BJ (cell line): ENCODE measurements at regions of chr3 and their contacts with region 1.

Region 1: DNA sequence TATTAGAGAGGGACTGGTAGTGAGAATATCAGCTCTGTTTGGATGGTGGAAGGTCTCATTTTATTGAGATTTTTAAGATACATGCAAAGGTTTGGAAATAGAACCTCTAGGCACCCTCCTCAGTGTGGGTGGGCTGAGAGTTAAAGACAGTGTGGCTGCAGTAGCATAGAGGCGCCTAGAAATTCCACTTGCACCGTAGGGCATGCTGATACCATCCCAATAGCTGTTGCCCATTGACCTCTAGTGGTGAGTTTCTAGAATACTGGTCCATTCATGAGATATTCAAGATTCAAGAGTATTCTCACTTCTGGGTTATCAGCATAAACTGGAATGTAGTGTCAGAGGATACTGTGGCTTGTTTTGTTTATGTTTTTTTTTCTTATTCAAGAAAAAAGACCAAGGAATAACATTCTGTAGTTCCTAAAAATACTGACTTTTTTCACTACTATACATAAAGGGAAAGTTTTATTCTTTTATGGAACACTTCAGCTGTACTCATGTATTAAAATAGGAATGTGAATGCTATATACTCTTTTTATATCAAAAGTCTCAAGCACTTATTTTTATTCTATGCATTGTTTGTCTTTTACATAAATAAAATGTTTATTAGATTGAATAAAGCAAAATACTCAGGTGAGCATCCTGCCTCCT is 87.2 kb downstream of the TGFBR2 start:
- DNase-seq: no peak
- H3K4me3 ChIP-seq: no peak overlapping the region
- H3K27me3 ChIP-seq: no peaks in the 10 kb centered on the region
- CTCF ChIP-seq: peak; percentile 74

Region 2: GRCh38 chr3:30042274-30042859 is 651.2 kb before region 1 on chr3:
- CTCF ChIA-PET with region 1: interaction called, 10 read pairs
- POLR2A ChIA-PET with region 1: no interaction called
- DNase-seq: peak; percentile 10
- H3K4me3 ChIP-seq: no peak overlapping the region
- H3K27me3 ChIP-seq: no peaks in the 10 kb centered on the region
- CTCF ChIP-seq: peak; percentile 70

Region 3: GRCh38 chr3:30112902-30113484 is 580.6 kb before region 1 on chr3:
- CTCF ChIA-PET with region 1: interaction called, 26 read pairs
- POLR2A ChIA-PET with region 1: no interaction called
- DNase-seq: no peak
- H3K4me3 ChIP-seq: no peak overlapping the region
- H3K27me3 ChIP-seq: no peaks in the 10 kb centered on the region
- CTCF ChIP-seq: peak; percentile 61

Region 4: DNA sequence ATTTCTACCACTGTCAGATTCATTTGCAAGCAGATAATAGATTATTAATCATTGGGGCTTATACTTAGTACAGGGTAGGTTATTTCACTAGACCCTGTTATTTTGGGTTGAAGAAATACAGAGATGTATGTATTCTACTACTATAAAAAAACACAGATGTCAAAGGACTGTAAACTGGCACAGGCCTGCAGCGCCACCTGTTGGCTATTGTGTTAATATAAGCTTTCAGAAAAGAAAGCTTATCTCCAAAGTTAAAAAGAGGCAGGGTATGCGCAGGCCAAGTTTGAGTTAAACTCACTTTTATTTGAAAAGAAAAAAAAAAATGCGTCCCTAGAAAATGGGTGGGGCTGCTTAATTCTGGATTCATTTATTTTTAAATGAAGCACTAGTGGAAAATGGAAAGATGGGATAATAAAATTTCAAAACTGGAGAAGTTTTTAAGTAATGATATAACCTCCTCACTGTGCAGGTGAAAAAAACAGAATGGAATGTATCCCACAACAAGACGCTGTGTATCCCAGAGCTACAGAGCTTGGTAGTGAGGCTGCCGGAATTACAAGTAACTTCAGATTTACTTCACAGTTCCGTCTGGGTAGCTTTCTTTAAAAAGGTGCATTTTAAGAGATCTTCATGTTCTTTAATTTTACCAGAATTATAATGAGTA is 494.4 kb before region 1 on chr3:
- CTCF ChIA-PET with region 1: interaction called, 43 read pairs
- POLR2A ChIA-PET with region 1: no interaction called
- DNase-seq: no peak
- H3K4me3 ChIP-seq: no peak overlapping the region
- H3K27me3 ChIP-seq: no peaks in the 10 kb centered on the region
- CTCF ChIP-seq: peak; percentile 75

Region 5: GRCh38 chr3:30606301-30607031 is 87.1 kb before region 1 on chr3 and contains the start of gene TGFBR2:
- CTCF ChIA-PET with region 1: interaction called, 12 read pairs
- POLR2A ChIA-PET with region 1: no interaction called
- DNase-seq: peak; percentile 93
- H3K4me3 ChIP-seq: peak within 1 kb of the TSS; percentile 65
- H3K27me3 ChIP-seq: no peaks in the 10 kb centered on the region
- CTCF ChIP-seq: no peak; the same call in 1 of the 2 replicates
- polyA plus RNA-seq, gene TGFBR2: 61.0 and 73.1 TPM in 2 replicates

Region 6: DNA sequence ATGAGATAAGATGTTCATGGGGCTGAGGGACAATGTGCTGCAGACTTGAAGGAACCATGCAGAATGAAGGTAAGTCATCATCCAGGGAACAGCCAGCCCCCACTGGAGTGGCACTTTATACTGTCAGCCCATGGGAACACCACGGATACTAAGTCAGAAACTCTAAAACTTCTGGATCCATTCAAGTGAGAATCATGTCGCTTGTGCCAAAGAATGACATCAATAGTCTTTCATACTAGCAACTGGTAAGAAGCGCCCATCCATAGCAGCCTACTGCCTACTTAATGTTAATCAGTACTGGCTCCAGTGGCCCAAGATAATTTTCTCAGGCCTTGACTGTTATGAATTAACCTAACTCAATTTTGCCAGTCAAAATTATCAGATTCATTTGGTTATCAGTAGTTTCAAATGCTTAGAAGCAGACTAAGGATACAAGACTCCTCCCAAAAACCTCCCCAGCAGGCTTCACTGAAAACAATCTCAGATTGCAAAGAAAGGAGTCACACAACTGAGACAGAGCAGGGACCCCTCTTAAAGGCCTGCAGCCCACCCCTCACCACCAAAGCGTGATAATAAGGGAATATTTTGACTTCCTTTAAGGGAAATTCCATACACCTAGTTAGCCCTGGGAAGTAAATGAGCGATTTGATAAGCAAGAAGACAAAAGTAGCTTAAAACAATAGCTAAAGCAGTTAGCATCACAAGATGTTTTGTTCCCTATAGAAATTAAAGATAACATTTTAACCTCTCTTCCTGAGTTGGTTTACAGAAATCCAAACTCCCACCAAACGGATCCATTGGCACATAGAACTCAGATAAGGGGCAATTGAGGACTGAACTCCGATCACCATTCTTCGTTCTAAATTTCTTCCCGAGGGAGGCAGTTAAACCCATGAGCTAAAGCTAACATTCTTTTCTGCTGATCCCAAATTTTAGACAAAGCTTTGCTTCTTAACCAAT is 11.6 kb after region 1 on chr3:
- CTCF ChIA-PET with region 1: interaction called, 27 read pairs
- POLR2A ChIA-PET with region 1: no interaction called
- DNase-seq: no peak
- H3K4me3 ChIP-seq: no peak overlapping the region
- H3K27me3 ChIP-seq: no peaks in the 10 kb centered on the region
- CTCF ChIP-seq: no peak

Region 7: DNA sequence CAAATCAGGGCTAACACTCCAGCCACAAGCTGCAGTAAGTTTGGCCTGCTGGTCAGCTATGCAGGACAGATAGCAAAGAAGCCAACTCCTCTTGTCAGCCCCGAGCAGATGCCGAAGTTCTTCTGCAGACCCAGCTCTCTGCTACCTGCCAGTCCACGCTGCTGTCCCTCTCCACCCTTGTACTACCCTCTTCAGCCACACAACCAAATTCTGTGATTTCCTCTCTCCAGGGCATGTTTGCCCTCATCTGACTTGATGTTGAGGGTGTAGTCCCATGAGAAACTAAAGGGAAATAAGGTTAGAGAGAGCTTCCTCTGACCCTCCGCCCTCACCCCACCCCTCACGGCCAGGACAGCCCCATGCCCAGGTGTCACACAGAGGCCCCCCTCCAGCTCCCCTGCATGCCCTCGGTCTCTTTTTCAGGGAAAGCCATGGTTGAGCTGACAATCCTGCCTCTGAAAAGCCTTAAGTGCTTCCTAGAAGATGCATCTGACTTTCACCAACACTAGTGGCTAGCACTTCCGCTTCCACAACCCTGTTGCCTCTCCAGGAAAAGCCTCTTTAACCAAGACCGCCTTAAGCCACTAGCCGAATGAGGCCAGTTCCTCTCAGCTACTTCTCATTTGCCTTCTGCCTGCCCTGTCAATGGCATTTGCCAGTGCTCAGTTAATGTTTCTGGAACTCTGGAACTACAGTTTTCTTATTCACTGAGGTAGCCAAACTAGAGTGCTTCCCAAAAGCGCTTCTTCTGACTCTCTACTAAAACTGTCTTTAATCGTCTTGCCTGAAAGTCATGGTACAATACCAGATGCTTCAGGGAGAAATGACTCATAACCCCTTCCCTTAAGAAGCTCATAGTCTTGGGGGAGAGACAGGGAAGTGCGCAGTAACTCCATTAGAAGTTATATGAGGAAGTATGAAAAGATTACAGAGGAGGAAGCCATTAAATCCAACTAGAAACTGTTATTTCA is 538.7 kb after region 1 on chr3:
- CTCF ChIA-PET with region 1: no interaction called
- POLR2A ChIA-PET with region 1: no interaction called
- DNase-seq: no peak
- H3K4me3 ChIP-seq: no peak overlapping the region
- H3K27me3 ChIP-seq: peaks cover 2% of the 10 kb centered on the region
- CTCF ChIP-seq: no peak